Activated CD4-positive, alpha-beta memory T cell treated with anti-CD3 and anti-CD28 coated beads for 36 hours (primary cell): ENCODE measurements at regions of chr16 and their contacts with region 1.

Region 1: GRCh38 chr16:46830902-46831647 is at the start of gene C16orf87:
- DNase-seq: peak; percentile 93
- H3K4me3 Mint-ChIP-seq: peak within 1 kb of the TSS; percentile 90
- H3K27ac Mint-ChIP-seq: peak within 1 kb of the TSS; percentile 97
- H3K4me1 Mint-ChIP-seq: peaks cover 33% of the 10 kb centered on the region
- H3K27me3 Mint-ChIP-seq: no peaks in the 10 kb centered on the region
- total RNA-seq, gene C16orf87: 18.1 to 18.2 TPM

Region 2: GRCh38 chr16:46621006-46621933 is 209.8 kb before region 1 on chr16 and contains the start of gene SHCBP1:
- CTCF ChIA-PET with region 1: no interaction called
- POLR2A ChIA-PET with region 1: no interaction called
- intact Hi-C with region 1: loop called (anchors 2 kb)
- DNase-seq: peak; percentile 91
- H3K4me3 Mint-ChIP-seq: peak within 1 kb of the TSS; percentile 89
- H3K27ac Mint-ChIP-seq: peak within 1 kb of the TSS; percentile 69
- H3K4me1 Mint-ChIP-seq: peaks cover 23% of the 10 kb centered on the region
- H3K27me3 Mint-ChIP-seq: no peaks in the 10 kb centered on the region
- total RNA-seq, gene SHCBP1: 49.0 to 50.5 TPM

Region 3: DNA sequence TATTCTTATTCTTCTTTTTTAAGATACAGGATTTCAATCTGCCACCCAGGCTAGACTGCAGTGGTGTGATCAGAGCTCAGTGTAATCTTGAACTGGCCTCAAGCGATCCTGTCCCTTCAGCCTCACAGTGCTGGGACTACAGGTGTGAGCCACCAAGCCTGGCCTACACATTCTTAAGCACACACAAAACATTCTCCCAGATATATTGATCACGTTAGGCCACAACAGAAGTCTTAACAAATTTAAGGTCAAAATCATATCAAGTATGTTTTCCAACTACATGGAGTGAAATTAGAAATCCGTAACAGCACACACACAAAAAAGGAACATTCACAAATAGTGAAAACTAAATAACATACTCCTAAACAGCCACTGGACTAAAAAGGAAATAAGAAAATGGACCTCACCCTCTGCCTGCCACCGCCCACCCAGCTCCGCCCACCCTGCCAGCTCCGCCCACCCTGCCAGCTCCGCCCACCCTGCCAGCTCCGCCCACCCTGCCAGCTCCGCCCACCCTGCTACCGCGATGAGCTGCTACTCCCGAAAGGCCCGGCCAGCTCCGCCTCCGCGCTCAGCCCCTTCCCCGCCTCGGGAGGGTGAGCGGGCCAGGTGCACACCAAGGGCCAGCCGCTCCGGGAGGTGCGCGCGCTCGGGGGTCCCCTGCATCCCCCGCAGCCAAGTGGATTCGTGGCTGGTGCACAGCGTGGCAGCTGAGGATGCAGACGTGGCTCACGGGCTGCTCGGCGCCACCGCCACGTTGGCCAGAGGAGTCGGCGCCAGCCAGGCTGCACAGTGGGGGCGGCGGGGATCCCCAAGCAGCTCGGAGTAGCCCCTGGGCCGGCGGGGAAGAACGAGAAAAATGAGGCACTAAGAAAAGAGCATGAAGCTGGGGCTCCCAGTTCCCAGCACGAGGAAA is 41.3 kb before region 1 on chr16:
- CTCF ChIA-PET with region 1: no interaction called
- POLR2A ChIA-PET with region 1: interaction called, 6 read pairs
- intact Hi-C with region 1: loop called (anchors 1 kb)
- DNase-seq: peak; percentile 88
- H3K4me3 Mint-ChIP-seq: peak overlapping the region; percentile 69
- H3K27ac Mint-ChIP-seq: peak overlapping the region; percentile 7
- H3K4me1 Mint-ChIP-seq: peaks cover 22% of the 10 kb centered on the region
- H3K27me3 Mint-ChIP-seq: no peaks in the 10 kb centered on the region

Region 4: DNA sequence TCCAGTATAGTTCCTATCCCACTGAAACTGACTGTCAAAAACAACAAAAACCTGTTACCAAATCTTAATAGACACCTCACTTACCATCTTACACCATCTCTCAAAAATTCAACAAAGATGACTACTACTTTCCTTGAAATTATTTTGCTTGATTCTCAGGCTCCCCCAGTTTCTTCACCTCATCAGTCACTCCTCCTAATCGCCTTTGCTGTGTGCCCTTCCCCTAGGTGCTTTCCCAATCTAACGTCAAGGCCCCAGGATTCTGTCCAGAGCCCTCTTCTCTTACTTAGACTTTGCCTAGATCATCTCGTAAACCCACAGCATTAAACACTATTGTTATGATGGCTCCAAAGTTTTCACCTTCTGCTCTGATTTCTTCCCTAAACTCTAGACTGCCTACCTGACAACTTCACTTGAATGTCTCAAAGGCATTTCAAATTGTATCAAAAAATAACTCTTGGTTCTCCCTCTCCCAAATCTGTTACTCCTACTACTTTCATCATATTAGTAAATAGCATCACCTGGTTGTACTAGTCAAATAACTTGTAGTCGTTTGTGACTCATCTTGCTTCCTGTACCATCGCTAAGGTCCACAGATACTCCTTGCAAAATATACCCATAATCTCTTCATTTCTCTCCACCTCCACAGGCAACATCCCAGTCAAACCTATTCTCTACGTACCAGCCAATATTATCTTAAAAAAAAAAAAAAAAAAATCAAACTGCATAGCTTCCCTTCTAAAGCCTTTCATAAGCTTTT is 18.1 kb before region 1 on chr16:
- CTCF ChIA-PET with region 1: interaction called, 7 read pairs
- POLR2A ChIA-PET with region 1: no interaction called
- intact Hi-C with region 1: loop called (anchors 1 kb)
- DNase-seq: peak; percentile 30
- H3K4me3 Mint-ChIP-seq: peak overlapping the region; percentile 12
- H3K27ac Mint-ChIP-seq: peak overlapping the region; percentile 80
- H3K4me1 Mint-ChIP-seq: peaks cover 53% of the 10 kb centered on the region
- H3K27me3 Mint-ChIP-seq: no peaks in the 10 kb centered on the region

Region 5: DNA sequence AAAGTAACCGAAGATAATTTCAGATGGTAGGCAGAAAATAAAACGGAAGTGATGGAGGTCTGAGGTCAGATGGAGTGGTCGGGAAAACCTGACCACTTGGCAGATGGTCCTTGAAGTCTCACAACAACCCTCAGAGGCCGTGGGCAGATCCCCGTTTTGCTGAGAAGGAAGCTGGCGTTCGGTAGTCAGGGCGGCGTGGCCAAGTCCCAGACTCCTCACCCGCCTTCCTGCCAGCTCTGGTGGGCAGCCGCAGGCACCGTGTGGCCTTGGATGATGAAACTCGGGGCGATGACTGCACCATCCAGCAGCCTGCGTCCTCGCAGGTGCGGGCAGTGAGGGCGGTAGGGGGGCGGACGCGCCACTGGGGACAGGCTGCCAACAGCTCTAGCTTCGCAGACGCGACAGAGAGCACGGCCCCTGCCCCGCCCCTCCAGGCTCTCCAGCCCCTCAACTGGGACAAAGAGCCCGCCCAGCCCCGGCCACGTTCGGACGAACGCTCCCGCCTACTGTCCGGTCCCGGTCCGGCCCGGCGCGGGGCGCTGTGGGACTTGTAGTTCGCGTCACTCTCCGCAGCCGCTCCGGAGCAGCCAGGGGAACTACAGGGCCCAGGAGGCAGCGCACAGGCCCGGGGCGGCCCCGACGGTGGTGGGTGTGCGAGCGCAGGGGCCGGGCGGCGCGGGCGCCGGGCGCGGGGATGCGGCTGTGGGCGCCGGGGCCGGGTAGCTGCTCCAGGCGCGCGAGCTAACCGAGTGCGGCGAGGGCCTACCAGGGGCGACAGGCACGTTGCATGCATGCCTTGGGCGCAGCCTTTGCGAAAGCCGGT is 52.8 kb after region 1 on chr16 and contains the start of gene GPT2:
- CTCF ChIA-PET with region 1: no interaction called
- POLR2A ChIA-PET with region 1: interaction called, 3 read pairs
- intact Hi-C with region 1: loop called (anchors 1 kb)
- DNase-seq: peak; percentile 88
- H3K4me3 Mint-ChIP-seq: peak within 1 kb of the TSS; percentile 73
- H3K27ac Mint-ChIP-seq: peak within 1 kb of the TSS; percentile 72
- H3K4me1 Mint-ChIP-seq: peaks cover 18% of the 10 kb centered on the region
- H3K27me3 Mint-ChIP-seq: peaks cover 5% of the 10 kb centered on the region
- total RNA-seq, gene GPT2: 20.2 to 23.1 TPM

Region 6: DNA sequence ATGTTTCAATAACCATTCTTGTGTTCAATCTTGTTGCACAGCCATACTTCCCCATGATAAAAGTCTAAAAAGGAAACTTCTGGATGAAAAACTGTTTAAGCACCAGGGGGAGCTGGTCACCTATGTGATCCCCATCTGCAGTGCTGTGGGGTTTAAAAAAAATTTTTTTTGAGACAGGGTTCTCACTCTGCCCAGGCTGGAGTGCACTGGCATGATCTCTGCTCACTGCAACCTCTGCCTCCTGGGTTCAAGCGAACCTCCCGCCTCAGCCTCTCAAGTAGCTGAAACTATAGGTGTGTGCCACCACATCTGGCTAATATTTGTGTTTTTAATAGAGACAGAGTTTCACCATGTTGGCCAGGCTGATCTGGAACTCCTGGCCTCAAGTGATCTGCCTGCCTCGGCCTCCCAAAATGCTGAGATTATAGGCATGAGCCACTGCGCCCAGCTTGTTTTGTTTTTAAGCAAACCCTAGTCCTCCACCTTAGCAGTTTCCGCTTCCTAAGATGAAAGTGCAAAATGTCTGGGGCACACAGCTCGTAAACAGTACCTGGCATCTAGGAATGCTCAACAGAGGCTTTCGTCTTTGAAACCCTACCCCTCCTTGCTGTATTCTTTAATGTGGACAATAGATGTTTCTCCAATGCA is 116.9 kb after region 1 on chr16:
- CTCF ChIA-PET with region 1: no interaction called
- POLR2A ChIA-PET with region 1: interaction called, 3 read pairs
- intact Hi-C with region 1: loop called (anchors 1 kb)
- DNase-seq: peak; percentile 57
- H3K4me3 Mint-ChIP-seq: no peak overlapping the region
- H3K27ac Mint-ChIP-seq: peak overlapping the region; percentile 76
- H3K4me1 Mint-ChIP-seq: peaks cover 34% of the 10 kb centered on the region
- H3K27me3 Mint-ChIP-seq: no peaks in the 10 kb centered on the region